PC-3 (cell line): ENCODE measurements at regions of chr9 and their contacts with region 1.

Region 1: DNA sequence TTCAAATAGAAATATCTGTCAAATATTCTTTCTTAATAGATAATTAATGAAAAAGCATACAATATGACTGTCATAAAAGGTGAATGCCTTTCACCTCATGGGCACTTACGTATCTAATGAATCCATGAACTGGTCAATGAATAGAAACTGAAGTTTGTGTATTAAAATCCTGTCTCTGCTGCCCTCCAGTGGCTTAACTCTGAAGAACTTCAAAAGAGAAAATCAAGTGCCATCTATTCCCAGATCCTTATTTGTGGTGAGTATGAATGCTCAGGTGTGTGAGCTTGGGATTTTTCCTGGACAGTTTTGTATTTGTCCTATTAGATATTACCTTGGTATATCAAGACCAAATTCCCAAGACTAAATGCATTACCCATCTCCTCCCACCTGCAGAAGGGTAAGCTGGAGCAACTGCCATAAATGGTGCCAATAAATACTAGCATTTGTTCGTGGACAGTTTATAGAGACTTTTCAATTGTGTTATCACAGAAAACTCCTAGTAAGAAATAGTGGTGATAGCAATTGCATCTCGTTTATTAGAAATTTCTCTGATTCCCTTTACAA is 44.0 kb upstream of the SVEP1 start:
- DNase-seq: peak; percentile 79
- ATAC-seq: peak; percentile 56
- H3K4me3 ChIP-seq: no peak overlapping the region
- H3K27ac ChIP-seq: no peak overlapping the region
- H3K4me1 ChIP-seq: peaks cover 13% of the 10 kb centered on the region
- H3K27me3 ChIP-seq: no peaks in the 10 kb centered on the region
- CTCF ChIP-seq: peak; percentile 70

Region 2: GRCh38 chr9:110183208-110184145 is 440.1 kb before region 1 on chr9:
- CTCF ChIA-PET with region 1: interaction called, 4 read pairs
- POLR2A ChIA-PET with region 1: no interaction called
- intact Hi-C with region 1: loop called (anchors 1 kb)
- DNase-seq: peak; percentile 80
- ATAC-seq: peak; percentile 66
- H3K4me3 ChIP-seq: no peak overlapping the region
- H3K27ac ChIP-seq: no peak overlapping the region
- H3K4me1 ChIP-seq: peaks cover 20% of the 10 kb centered on the region
- H3K27me3 ChIP-seq: no peaks in the 10 kb centered on the region
- CTCF ChIP-seq: peak; percentile 81

Region 3: DNA sequence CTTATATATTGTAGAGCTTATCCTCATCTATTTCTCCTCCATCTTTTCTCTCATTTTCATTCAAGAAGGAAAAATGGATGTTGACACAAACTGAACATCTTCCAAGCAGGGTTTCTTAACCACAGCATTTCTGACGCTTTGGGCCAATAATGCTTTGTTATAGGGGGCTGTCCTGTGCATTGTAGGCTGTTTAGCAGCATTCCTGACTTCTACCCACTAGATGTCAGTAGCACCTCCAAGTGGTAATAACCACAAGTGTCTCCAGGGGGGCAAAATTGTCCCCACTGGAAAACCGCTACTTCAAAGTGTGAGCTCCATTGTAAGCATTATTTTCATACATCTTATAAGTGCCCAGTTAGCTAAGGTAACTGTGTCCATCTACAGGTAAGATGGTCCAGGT is 283.2 kb before region 1 on chr9:
- CTCF ChIA-PET with region 1: no interaction called
- POLR2A ChIA-PET with region 1: no interaction called
- intact Hi-C with region 1: loop called (anchors 2 kb)
- DNase-seq: peak; percentile 37
- ATAC-seq: peak; percentile 48; the same call in 1 of the 2 replicates
- H3K4me3 ChIP-seq: no peak overlapping the region
- H3K27ac ChIP-seq: no peak overlapping the region
- H3K4me1 ChIP-seq: no peaks in the 10 kb centered on the region
- H3K27me3 ChIP-seq: no peaks in the 10 kb centered on the region
- CTCF ChIP-seq: peak; percentile 69

Region 4: DNA sequence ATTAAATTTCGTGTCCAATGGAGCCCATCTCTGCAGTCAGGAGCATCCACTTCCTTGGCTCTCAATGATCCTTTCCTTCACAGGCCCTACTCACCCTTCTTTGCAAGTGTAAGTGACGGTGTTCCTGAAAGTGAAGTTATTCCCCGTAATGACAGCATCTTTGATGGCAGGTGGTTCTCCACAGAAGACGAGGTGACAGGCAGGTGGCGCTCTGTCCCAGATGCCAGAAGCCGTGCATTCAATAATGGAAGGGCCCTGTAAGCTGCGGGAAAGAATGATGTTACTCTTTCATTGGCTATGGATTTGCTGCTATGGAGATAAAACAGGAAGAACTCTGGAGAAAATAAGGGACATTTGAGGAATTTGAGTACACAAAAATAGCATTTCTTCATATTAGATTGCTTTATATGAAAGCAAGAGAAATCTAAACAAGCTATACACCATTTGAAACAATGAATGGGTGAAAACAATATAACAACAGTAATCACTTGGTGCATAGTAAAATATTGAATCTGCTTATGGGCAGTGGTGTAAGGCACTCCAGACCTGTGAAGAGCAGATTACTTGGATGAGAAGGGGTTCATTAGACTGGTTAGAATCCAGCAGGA is 195.9 kb before region 1 on chr9:
- CTCF ChIA-PET with region 1: no interaction called
- POLR2A ChIA-PET with region 1: no interaction called
- intact Hi-C with region 1: loop called (anchors 5 kb)
- DNase-seq: peak; percentile 69
- ATAC-seq: peak; percentile 77
- H3K4me3 ChIP-seq: no peak overlapping the region
- H3K27ac ChIP-seq: no peak overlapping the region
- H3K4me1 ChIP-seq: no peaks in the 10 kb centered on the region
- H3K27me3 ChIP-seq: no peaks in the 10 kb centered on the region
- CTCF ChIP-seq: peak; percentile 82

Region 5: DNA sequence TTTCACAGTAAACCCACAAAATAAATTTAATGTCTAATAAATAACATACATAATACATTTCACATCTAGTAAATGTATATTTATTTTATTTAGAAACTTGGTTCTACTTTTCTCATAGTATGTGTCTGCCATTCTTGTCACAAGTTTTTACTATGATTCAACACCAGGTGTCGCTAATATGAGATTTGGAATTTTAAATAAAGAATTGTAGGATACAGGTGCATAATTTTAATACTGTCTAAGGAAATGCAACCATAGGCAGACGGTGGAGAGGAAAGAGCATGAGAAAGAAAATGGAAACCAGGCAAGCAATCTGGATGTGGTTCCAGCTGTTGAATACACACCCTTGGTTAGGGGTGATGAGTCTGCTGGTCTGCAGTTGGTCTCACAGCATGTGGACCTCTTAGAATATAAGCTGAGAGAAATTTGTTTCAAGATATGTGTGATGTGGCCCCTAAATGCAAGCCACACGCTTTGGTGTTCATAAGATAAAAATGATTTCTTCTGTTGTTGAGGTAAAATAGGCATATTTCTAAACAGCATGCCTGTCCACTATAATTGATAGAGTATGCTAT is 171.2 kb before region 1 on chr9:
- CTCF ChIA-PET with region 1: no interaction called
- POLR2A ChIA-PET with region 1: no interaction called
- intact Hi-C with region 1: loop called (anchors 1 kb)
- DNase-seq: peak; percentile 50
- ATAC-seq: peak; percentile 54
- H3K4me3 ChIP-seq: no peak overlapping the region
- H3K27ac ChIP-seq: no peak overlapping the region
- H3K4me1 ChIP-seq: no peaks in the 10 kb centered on the region
- H3K27me3 ChIP-seq: no peaks in the 10 kb centered on the region
- CTCF ChIP-seq: peak; percentile 59